MCF 10A (cell line): ENCODE measurements at regions of chr3 and their contacts with region 1.

Region 1: DNA sequence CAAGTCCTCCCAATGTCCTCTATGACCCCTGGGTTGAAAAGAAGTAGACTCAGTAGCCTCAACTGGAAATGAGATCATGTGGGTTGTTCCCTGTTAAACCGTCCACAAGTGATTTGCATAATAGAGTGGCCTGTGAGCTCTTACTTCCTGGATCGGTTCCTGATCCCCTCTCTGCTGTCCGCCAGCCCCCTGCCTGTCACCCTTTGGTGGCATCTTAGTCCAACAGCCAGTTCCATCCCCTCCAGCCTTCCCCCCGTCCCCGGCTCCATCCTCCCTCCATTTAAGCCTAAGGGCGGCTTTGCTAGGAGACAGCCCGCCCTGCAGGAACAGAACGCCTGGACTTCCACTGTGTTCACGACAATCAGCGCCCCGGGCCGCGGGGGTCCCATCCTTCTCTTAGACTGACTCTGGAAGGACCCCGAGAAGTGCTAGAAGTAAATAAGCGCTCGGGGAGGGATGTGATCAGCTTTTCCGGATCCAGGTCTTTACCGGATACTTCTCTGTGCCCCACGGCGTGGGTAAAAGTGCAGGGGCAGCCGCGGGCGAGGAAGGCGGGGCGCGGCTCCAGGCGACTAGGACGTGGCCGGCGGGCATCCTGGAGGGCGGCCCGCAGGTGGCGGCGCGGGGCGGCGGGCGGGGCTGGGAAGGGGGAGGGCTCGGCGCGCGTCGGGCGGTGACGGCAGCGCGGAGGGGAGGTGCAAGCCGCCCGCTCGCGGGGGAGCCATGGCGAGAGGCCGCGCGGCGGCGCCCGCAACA is 51.2 kb upstream of the ULK4 start:
- DNase-seq: peak; percentile 59
- H3K4me3 Mint-ChIP-seq: peak overlapping the region; percentile 78
- H3K27ac Mint-ChIP-seq: no peak overlapping the region
- H3K4me1 Mint-ChIP-seq: peaks cover 24% of the 10 kb centered on the region
- H3K27me3 Mint-ChIP-seq: no peaks in the 10 kb centered on the region
- CTCF ChIP-seq: no peak

Region 2: GRCh38 chr3:40920041-40920440 is 1093.1 kb before region 1 on chr3:
- CTCF ChIA-PET with region 1: no interaction called
- POLR2A ChIA-PET with region 1: no interaction called
- intact Hi-C with region 1: no loop called
- DNase-seq: peak; percentile 59
- H3K4me3 Mint-ChIP-seq: no peak overlapping the region
- H3K27ac Mint-ChIP-seq: no peak overlapping the region
- H3K4me1 Mint-ChIP-seq: peaks cover 6% of the 10 kb centered on the region
- H3K27me3 Mint-ChIP-seq: no peaks in the 10 kb centered on the region
- CTCF ChIP-seq: no peak

Region 3: GRCh38 chr3:41893977-41894376 is 119.1 kb before region 1 on chr3:
- CTCF ChIA-PET with region 1: no interaction called
- POLR2A ChIA-PET with region 1: interaction called, 3 read pairs
- intact Hi-C with region 1: loop called (anchors 5 kb)
- DNase-seq: peak; percentile 65
- H3K4me3 Mint-ChIP-seq: no peak overlapping the region
- H3K27ac Mint-ChIP-seq: no peak overlapping the region
- H3K4me1 Mint-ChIP-seq: no peaks in the 10 kb centered on the region
- H3K27me3 Mint-ChIP-seq: no peaks in the 10 kb centered on the region
- CTCF ChIP-seq: peak; percentile 40

Region 4: DNA sequence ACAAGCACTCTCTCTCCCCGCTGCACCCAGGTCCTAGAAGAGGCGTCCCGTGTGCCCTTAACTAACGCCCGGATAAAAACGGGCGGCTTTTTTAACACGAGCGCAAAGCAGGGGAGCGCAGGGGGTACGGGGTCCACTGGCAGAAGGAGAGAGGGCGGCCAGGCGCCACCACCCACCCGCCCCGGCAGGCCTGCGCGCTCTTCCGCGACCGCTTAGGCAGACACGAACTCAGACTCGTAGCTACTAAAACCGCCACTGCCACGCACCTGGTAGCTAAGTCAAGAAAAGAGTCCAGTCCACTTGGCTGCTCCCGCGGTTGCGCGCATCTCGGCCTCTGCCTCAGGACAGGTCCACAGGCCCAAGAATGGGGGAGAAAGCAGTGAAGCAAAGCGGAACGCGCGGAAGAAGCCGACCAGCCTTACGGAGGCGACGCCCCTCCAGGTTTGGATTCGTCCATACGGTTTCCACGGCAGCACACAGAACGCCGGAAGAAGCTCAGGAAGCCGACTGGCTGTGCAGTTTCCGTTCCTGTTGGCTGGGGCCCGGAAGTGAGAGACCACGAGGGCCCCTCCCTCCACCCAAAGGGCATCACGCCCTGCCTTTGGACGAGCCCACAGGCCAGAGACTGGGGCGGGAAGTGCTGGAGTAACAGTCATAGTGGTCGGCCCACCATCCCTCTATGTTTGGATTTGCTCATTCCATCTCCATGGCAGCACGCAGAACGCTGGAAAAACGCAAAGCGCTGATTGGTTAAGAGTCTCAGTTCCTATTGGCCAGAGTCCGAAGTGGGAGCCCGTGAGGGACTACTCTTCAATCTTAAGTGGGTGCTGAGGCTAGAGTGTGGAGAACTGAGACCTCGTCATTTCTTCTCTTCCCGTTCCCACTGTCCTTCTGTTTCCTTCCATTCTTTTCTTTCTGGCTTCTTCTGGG is 51.1 kb before region 1 on chr3 and contains the start of gene ULK4:
- CTCF ChIA-PET with region 1: no interaction called
- POLR2A ChIA-PET with region 1: interaction called, 12 read pairs
- intact Hi-C with region 1: loop called (anchors 2 kb)
- DNase-seq: peak; percentile 99
- H3K4me3 Mint-ChIP-seq: peak within 1 kb of the TSS; percentile 81
- H3K27ac Mint-ChIP-seq: peak within 1 kb of the TSS; percentile 89
- H3K4me1 Mint-ChIP-seq: peaks cover 6% of the 10 kb centered on the region
- H3K27me3 Mint-ChIP-seq: no peaks in the 10 kb centered on the region
- CTCF ChIP-seq: no peak
- total RNA-seq, gene ULK4: 6.9 and 7.8 TPM in 2 replicates

Region 5: DNA sequence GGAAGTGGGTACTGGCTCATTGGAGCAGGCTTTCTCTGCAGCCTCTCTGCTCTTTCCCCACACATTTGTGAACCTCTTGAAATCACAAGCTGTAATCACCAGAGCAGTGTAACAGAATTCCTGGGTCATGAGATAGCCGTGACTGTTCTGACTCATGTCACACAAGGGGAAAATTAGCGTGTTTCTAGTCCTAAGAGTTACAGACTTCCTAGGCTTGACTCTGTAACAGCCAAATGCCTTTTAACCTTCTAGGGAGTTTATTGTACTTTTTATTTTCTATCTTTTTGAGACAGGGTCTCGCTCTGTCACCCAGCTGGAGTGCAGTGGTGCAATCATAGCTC is 23.3 kb after region 1 on chr3:
- CTCF ChIA-PET with region 1: no interaction called
- POLR2A ChIA-PET with region 1: interaction called, 13 read pairs
- intact Hi-C with region 1: no loop called
- DNase-seq: peak; percentile 70
- H3K4me3 Mint-ChIP-seq: no peak overlapping the region
- H3K27ac Mint-ChIP-seq: peak overlapping the region; percentile 70
- H3K4me1 Mint-ChIP-seq: peaks cover 63% of the 10 kb centered on the region
- H3K27me3 Mint-ChIP-seq: no peaks in the 10 kb centered on the region
- CTCF ChIP-seq: no peak

Region 6: DNA sequence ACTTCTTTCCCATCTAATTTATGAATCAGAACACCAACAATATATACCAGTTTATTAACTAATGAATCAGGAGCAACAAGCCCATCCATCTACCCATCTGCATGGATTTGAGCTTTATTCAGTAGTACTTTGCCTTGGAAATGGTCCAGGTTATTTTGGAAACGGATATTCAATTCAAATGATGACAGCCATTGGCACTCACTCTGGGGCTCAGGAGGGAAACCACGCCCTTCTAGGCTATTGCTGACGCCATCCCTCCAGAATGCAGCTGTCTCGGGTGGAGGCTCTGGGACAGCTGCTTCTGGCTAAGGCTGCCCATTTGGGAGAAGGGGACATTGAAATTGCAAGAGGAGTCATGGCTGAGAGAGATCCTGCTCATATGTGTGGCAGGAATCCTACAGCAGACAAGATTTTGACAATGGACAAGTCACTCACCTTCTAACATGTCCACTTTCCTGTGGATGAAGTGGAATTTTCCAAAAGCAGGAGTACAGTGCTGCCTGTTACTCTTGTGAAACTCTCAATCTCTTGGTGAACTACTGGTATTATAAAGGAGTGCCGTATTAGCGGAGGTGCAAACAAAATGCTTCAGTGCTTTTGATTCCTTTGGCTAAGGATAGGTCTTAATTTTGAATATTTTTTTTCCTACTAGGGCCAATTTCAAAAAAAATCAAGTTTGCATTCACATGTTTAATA is 48.7 kb after region 1 on chr3:
- CTCF ChIA-PET with region 1: interaction called, 4 read pairs
- POLR2A ChIA-PET with region 1: interaction called, 12 read pairs
- intact Hi-C with region 1: loop called (anchors 2 kb)
- DNase-seq: peak; percentile 90
- H3K4me3 Mint-ChIP-seq: peak overlapping the region; percentile 58
- H3K27ac Mint-ChIP-seq: peak overlapping the region; percentile 97
- H3K4me1 Mint-ChIP-seq: peaks cover 34% of the 10 kb centered on the region
- H3K27me3 Mint-ChIP-seq: no peaks in the 10 kb centered on the region
- CTCF ChIP-seq: no peak

Region 7: GRCh38 chr3:42080452-42080891 is 67.4 kb after region 1 on chr3:
- CTCF ChIA-PET with region 1: interaction called, 20 read pairs
- POLR2A ChIA-PET with region 1: interaction called, 9 read pairs
- intact Hi-C with region 1: no loop called
- DNase-seq: peak; percentile 84
- H3K4me3 Mint-ChIP-seq: peak overlapping the region; percentile 37
- H3K27ac Mint-ChIP-seq: peak overlapping the region; percentile 97
- H3K4me1 Mint-ChIP-seq: peaks cover 28% of the 10 kb centered on the region
- H3K27me3 Mint-ChIP-seq: no peaks in the 10 kb centered on the region
- CTCF ChIP-seq: no peak

Region 8: GRCh38 chr3:42090973-42091731 is 78.0 kb after region 1 on chr3 and contains the start of gene TRAK1:
- CTCF ChIA-PET with region 1: interaction called, 11 read pairs
- POLR2A ChIA-PET with region 1: interaction called, 18 read pairs
- intact Hi-C with region 1: no loop called
- DNase-seq: peak; percentile 91
- H3K4me3 Mint-ChIP-seq: peak within 1 kb of the TSS; percentile 70
- H3K27ac Mint-ChIP-seq: peak within 1 kb of the TSS; percentile 72
- H3K4me1 Mint-ChIP-seq: peaks cover 20% of the 10 kb centered on the region
- H3K27me3 Mint-ChIP-seq: no peaks in the 10 kb centered on the region
- CTCF ChIP-seq: no peak
- total RNA-seq, gene TRAK1: 32.8 and 33.2 TPM in 2 replicates

Region 9: DNA sequence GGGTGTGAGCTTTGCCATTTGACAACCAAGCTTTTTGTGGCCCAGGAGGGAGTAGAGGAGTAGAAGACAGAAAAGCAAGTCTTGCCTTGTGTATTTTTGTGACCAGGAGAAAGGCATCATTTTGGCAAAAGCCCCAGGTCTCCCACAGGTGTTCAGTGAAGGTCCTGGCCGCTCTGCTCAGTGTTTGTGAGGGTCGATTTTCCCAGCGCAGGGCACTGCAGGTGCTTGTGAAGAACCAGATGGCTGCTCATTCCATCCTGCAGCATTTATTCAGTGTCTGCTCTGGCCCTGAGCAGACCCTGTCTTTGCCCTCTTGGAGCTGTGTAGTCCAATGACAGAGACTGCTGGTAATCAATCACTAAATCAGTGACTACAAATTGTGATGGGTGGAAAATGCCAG is 97.5 kb after region 1 on chr3:
- CTCF ChIA-PET with region 1: no interaction called
- POLR2A ChIA-PET with region 1: no interaction called
- intact Hi-C with region 1: no loop called
- DNase-seq: no peak
- H3K4me3 Mint-ChIP-seq: no peak overlapping the region
- H3K27ac Mint-ChIP-seq: no peak overlapping the region
- H3K4me1 Mint-ChIP-seq: no peaks in the 10 kb centered on the region
- H3K27me3 Mint-ChIP-seq: no peaks in the 10 kb centered on the region
- CTCF ChIP-seq: no peak